ENCODE measurements at regions of chr1 and their contacts with region 1.

Region 1: GRCh38 chr1:19882111-19883071 is at the start of gene OTUD3:
- DNase-seq: peak; percentile 78
- H3K4me3 ChIP-seq: peak within 1 kb of the TSS; percentile 75
- CTCF ChIP-seq: peak; percentile 87

Region 2: GRCh38 chr1:19287436-19288185 is 594.8 kb before region 1 on chr1:
- CTCF ChIA-PET with region 1: no interaction called
- POLR2A ChIA-PET with region 1: no interaction called
- DNase-seq: no peak
- H3K4me3 ChIP-seq: no peak overlapping the region
- CTCF ChIP-seq: no peak

Region 3: GRCh38 chr1:19661721-19662228 is 220.6 kb before region 1 on chr1:
- CTCF ChIA-PET with region 1: interaction called, 27 read pairs
- POLR2A ChIA-PET with region 1: no interaction called
- DNase-seq: no peak
- H3K4me3 ChIP-seq: no peak overlapping the region
- CTCF ChIP-seq: peak; percentile 34

Region 4: DNA sequence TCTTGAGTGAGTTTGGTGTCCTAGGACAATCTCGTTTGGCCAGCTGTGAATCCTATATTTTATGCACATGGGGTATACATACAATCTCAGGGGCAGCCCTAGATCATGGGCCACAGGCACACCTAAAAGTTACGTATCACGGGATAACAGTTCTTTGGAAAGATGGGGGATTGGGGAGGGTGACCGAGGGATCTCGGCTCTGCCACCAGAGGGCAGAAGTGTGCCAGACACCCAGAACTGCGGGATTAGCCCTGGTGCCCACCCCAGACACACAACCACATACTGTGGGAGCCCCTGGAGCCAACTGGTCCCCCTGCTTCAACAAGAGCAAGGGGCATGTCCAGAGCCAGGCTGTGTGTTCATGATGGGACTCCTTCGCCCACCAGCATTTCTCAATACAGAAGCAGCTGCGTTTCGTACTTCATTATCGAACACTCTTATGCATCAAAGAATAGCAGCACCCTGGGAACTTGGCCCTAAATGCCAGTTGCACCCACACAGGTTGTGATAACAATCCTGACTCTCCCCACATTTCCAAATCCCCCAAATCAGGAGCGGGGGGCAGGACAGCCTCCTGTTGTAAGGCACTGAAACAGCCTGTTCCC is 120.1 kb before region 1 on chr1:
- CTCF ChIA-PET with region 1: interaction called, 11 read pairs
- POLR2A ChIA-PET with region 1: interaction called, 5 read pairs
- DNase-seq: no peak
- H3K4me3 ChIP-seq: no peak overlapping the region
- CTCF ChIP-seq: peak; percentile 81

Region 5: DNA sequence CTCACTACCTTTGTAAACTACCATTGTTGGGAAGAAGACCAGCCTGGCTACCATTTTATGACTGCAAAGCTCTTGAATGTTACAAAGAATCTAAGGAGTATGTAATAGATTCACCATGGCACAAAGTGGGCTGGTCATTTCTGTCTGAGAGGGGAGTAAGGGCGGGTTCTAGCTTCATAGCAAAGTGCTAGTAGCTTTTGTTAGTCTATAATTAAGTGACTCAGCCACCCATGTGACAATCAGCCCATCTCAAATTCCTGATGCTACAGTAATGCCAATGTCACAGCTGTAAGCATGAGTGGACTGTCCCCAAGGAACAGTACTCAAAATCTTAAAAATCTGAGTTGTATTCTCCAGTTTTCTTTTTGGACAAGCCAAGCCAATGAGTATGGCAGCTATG is 15.6 kb before region 1 on chr1:
- CTCF ChIA-PET with region 1: interaction called, 77 read pairs
- POLR2A ChIA-PET with region 1: interaction called, 5 read pairs
- DNase-seq: no peak
- H3K4me3 ChIP-seq: no peak overlapping the region
- CTCF ChIP-seq: no peak

Region 6: DNA sequence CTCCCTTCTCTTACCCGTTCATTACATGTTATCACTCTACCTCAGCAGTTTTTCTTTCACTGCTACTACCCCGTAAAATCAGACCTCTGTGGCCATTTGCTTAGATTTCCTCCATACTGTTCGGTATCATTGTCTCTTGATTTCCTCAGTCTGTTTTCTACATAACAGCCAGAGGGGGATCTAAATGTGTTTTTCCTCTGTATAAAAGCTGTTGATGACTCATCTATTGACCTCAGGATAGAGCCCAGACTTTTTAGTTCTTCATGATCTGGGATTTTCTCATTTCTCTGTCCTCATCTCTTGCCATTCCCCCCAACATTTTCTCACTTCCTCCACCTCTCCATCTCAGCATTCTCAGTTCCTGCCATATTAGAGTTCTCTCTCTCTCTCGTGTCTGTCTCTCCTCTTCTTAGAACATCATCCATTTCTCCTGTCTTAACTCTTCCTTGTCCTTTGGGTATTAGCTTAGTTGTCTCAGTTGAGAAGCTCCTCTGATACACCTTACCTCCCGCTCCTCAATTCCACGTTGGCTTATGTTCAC is 10.3 kb after region 1 on chr1:
- CTCF ChIA-PET with region 1: interaction called, 45 read pairs
- POLR2A ChIA-PET with region 1: no interaction called
- DNase-seq: no peak
- H3K4me3 ChIP-seq: no peak overlapping the region
- CTCF ChIP-seq: no peak

Region 7: GRCh38 chr1:19918057-19918456 is 35.7 kb after region 1 on chr1:
- CTCF ChIA-PET with region 1: interaction called, 13 read pairs
- POLR2A ChIA-PET with region 1: no interaction called
- DNase-seq: peak; percentile 49
- H3K4me3 ChIP-seq: no peak overlapping the region
- CTCF ChIP-seq: peak; percentile 86

Measured in AG04449 (cell line).